ENCODE measurements at regions of chr2 and their contacts with region 1.

Region 1: DNA sequence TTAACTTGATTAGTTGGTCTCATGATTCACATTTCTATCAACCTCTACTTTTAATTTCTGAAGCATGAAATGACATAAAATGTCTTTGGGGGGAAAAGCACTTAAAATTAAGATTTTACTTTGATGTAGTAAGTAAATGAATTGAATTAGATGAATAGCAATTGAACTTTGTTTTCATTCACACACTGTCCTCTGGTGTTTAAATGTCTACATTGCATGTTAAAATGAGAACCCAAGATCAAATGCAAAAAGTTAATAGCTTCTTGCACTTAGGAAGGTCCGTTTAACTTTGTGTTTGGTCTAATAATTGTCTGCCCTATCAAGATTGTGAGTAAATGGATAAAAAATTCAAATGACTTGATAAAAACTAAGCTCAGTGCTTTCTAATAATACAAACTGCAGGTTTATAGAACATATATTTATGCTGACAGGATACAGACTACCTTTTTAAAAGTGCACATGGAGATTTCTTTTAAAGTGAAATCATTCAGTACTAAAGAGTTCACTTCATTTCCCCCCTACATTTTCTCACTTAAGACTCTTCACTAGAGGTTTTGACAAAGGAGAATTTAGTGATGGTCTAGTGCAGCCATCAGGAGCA is 156.2 kb upstream of the NABP1 start:
- DNase-seq: peak; percentile 57
- H3K4me3 Mint-ChIP-seq: no peak overlapping the region
- H3K27ac Mint-ChIP-seq: no peak overlapping the region
- H3K4me1 Mint-ChIP-seq: no peaks in the 10 kb centered on the region
- H3K27me3 Mint-ChIP-seq: no peaks in the 10 kb centered on the region
- CTCF ChIP-seq: peak; percentile 51

Region 2: DNA sequence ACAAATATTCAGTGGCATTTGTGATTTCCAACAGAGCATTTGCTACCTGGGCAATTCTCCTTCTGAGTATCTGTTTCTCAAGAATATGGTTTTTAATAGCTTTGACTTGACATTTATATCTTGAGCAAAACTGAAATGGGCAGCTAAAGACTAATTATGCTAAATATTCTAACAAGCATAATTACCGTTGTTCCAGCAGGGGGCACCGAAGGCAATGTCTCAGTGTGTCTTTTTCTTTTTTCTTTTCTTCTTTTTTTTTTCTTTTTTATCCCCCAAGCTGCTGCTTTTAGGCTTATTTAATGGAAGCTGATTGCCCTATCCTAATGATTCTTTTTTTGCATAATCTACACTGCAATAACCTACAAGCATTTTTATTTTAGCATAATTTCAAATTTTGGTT is 17.4 kb after region 1 on chr2:
- CTCF ChIA-PET with region 1: interaction called, 34 read pairs
- POLR2A ChIA-PET with region 1: no interaction called
- intact Hi-C with region 1: no loop called
- DNase-seq: peak; percentile 44
- H3K4me3 Mint-ChIP-seq: no peak overlapping the region
- H3K27ac Mint-ChIP-seq: no peak overlapping the region
- H3K4me1 Mint-ChIP-seq: no peaks in the 10 kb centered on the region
- H3K27me3 Mint-ChIP-seq: no peaks in the 10 kb centered on the region
- CTCF ChIP-seq: peak; percentile 49

Measured in MCF 10A (cell line).